ENCODE measurements at regions of chr11 and their contacts with region 1.

Region 1: GRCh38 chr11:73404048-73404447 is 27.8 kb downstream of the RELT start:
- DNase-seq: no peak

Region 2: DNA sequence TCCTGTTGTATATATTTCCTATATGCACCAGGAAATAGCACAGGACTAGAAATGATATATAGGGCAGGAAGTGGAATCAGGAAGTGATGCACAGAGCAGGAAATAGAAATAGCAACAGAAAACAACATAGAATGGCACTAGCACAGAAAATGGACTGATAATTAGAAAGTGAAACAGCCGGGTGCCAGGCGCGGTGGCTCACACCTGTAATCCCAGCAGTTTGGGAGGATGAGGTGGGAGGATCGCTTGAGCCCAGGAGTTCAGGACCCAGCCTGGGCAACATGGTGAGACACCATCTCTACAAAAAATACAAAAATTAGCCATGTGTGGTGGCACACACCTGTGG is 37.8 kb before region 1 on chr11:
- intact Hi-C with region 1: no loop called
- DNase-seq: no peak

Region 3: DNA sequence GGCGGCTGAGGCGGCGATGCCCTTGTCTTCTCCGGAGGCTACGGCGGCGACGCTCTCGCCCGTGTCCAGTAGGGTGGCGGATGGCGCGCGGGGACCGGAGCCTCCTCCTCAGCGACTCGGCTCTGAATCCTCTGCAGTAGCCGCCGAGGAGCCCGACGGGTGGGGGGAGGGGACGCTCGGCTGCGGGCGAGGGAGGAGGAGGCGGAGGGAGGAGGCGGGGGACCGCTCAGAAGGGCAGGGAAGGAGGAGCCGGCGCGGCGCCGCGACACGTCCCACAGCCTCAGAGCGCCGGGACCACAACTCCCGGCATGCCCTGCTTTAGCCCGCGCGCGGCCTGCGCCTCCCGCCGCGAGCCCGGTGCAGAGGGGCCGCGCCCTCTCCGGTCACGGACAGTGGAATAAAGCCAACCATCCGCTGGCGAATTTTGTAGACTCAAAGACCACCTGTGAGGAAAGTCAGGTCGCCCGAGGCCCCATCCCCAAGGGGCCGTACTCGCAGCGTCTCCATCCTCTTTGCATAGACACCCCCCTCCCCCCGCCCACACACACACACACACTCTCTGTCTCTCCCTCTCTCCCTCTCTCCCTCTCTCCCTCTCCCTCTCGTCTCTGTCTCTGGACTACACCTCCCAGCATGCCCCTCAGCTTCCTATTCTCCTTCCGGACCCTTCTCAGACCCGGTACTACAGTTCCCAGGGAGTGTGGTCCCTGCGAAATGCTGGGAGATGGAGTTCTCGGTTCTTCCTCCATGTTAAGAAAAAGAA is 194.1 kb after region 1 on chr11 and contains the start of gene FAM168A:
- intact Hi-C with region 1: loop called (anchors 10 kb)
- DNase-seq: peak; percentile 98
- total RNA-seq, gene FAM168A: 29.5 TPM

Region 4: DNA sequence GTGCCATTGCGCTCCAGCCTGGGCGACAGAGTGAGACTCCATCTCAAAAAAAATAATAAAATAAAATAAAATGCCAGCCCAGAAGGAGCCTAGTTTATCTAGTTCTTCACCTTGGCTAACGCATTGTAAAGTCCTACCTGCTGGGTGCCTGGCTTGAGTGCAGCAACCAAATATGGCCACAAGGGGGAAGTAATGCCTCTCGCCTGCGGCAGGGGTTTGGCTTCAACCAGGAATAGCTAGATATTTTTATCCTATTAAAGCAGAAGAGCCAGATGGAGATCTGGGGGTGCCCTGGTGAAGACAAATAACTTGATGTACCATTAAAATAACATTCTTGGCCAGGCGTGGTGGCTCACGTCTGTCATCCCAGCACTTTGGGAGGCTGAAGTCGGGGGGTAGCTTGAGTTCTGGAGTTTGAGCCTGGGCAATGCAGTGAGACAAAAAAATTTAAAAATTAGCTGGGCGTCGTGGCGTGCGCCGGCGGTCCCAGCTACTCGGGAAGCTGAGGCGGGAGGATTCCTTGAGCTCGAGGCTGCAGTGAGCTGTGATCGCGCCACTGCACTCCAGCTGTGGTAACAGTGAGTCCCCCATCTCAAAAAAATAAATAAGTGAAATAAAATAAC is 221.8 kb after region 1 on chr11:
- intact Hi-C with region 1: loop called (anchors 10 kb)
- DNase-seq: peak; percentile 82

Region 5: DNA sequence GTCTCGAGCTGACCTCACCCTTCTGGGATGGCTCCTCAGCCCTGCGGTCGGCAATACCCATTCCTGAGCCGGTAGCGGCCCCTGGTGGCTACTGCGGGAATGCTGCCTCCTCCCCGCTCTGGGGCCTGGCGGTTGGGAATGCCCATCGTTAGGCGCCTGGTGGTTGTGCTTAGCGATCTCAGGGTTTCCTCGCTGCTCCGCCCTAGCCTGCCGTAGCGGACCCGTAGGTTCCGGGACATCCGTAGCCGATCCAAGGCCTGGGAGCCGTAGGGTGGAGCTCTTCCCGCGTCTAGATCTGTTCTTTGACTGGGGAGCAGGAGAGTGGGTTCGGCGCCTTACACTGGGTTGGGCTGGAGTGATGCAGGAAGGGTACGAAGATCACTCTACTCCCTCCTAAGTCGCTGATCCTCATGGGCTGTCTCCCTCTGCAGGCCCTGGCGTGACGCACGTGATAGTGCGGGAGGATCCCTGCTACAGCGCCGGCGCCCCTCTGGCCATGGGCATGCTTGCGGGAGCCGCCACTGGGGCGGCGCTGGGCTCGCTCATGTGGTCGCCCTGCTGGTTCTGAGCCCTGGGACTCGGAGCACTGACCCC is 257.1 kb after region 1 on chr11:
- intact Hi-C with region 1: loop called (anchors 1 kb)
- DNase-seq: peak; percentile 95